Activated CD4-positive, alpha-beta memory T cell treated with anti-CD3 and anti-CD28 coated beads for 36 hours (primary cell): ENCODE measurements at regions of chr13 and their contacts with region 1.

Region 1: GRCh38 chr13:78022164-78022877 is 103.7 kb upstream of the EDNRB start:
- DNase-seq: peak; percentile 68
- H3K4me3 Mint-ChIP-seq: no peak overlapping the region
- H3K27ac Mint-ChIP-seq: no peak overlapping the region
- H3K4me1 Mint-ChIP-seq: peaks cover 7% of the 10 kb centered on the region
- H3K27me3 Mint-ChIP-seq: peaks cover 5% of the 10 kb centered on the region

Region 2: GRCh38 chr13:77779552-77780272 is 242.6 kb before region 1 on chr13:
- CTCF ChIA-PET with region 1: no interaction called
- POLR2A ChIA-PET with region 1: no interaction called
- intact Hi-C with region 1: loop called (anchors 2 kb)
- DNase-seq: peak; percentile 17
- H3K4me3 Mint-ChIP-seq: no peak overlapping the region
- H3K27ac Mint-ChIP-seq: no peak overlapping the region
- H3K4me1 Mint-ChIP-seq: peaks cover 9% of the 10 kb centered on the region
- H3K27me3 Mint-ChIP-seq: no peaks in the 10 kb centered on the region

Region 3: GRCh38 chr13:77928909-77929308 is 93.4 kb before region 1 on chr13:
- CTCF ChIA-PET with region 1: no interaction called
- POLR2A ChIA-PET with region 1: no interaction called
- intact Hi-C with region 1: loop called (anchors 1 kb)
- DNase-seq: no peak
- H3K4me3 Mint-ChIP-seq: no peak overlapping the region
- H3K27ac Mint-ChIP-seq: no peak overlapping the region
- H3K4me1 Mint-ChIP-seq: peaks cover 3% of the 10 kb centered on the region
- H3K27me3 Mint-ChIP-seq: peaks cover 15% of the 10 kb centered on the region